MCF 10A (cell line): ENCODE measurements at regions of chr10 and their contacts with region 1.

Region 1: DNA sequence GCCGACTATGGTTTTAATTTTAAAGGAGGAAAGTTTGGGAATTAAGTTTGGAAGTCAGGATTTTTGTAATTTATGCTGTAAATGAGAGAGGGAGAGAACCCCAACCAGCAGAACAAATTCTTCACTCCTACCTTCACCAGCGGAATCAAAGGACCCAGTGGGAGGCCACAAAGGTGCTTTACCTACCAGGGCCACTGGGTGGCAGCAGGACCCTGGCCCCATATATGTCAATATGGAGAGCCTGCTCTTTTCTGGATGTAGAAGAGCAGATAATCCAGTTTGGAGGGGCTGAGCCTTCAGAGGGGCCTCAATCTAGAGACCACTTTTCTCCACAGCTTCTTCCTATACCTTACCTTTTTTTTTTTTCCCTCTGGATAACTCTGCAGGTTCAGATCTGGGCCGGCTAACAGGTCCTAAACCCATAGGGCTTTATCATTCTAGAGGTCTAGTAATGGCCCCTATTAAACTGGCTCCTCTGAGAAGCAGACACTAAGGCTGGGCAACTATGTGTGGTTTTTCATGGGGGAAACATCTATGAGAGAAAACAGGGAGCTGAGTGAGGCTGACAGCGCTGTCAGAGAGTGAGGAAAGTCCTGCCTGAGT is 8.5 kb upstream of the SCD start:
- DNase-seq: peak; percentile 70
- H3K4me3 Mint-ChIP-seq: no peak overlapping the region
- H3K27ac Mint-ChIP-seq: no peak overlapping the region
- H3K4me1 Mint-ChIP-seq: peaks cover 13% of the 10 kb centered on the region
- H3K27me3 Mint-ChIP-seq: peaks cover 15% of the 10 kb centered on the region
- CTCF ChIP-seq: peak; percentile 87

Region 2: GRCh38 chr10:100238429-100238828 is 100.1 kb before region 1 on chr10:
- CTCF ChIA-PET with region 1: no interaction called
- POLR2A ChIA-PET with region 1: no interaction called
- intact Hi-C with region 1: no loop called
- DNase-seq: no peak
- H3K4me3 Mint-ChIP-seq: no peak overlapping the region
- H3K27ac Mint-ChIP-seq: no peak overlapping the region
- H3K4me1 Mint-ChIP-seq: no peaks in the 10 kb centered on the region
- H3K27me3 Mint-ChIP-seq: no peaks in the 10 kb centered on the region
- CTCF ChIP-seq: no peak

Region 3: GRCh38 chr10:100327007-100327717 is 11.4 kb before region 1 on chr10:
- CTCF ChIA-PET with region 1: interaction called, 26 read pairs
- POLR2A ChIA-PET with region 1: no interaction called
- intact Hi-C with region 1: no loop called
- DNase-seq: no peak
- H3K4me3 Mint-ChIP-seq: no peak overlapping the region
- H3K27ac Mint-ChIP-seq: no peak overlapping the region
- H3K4me1 Mint-ChIP-seq: no peaks in the 10 kb centered on the region
- H3K27me3 Mint-ChIP-seq: peaks cover 81% of the 10 kb centered on the region
- CTCF ChIP-seq: no peak

Region 4: DNA sequence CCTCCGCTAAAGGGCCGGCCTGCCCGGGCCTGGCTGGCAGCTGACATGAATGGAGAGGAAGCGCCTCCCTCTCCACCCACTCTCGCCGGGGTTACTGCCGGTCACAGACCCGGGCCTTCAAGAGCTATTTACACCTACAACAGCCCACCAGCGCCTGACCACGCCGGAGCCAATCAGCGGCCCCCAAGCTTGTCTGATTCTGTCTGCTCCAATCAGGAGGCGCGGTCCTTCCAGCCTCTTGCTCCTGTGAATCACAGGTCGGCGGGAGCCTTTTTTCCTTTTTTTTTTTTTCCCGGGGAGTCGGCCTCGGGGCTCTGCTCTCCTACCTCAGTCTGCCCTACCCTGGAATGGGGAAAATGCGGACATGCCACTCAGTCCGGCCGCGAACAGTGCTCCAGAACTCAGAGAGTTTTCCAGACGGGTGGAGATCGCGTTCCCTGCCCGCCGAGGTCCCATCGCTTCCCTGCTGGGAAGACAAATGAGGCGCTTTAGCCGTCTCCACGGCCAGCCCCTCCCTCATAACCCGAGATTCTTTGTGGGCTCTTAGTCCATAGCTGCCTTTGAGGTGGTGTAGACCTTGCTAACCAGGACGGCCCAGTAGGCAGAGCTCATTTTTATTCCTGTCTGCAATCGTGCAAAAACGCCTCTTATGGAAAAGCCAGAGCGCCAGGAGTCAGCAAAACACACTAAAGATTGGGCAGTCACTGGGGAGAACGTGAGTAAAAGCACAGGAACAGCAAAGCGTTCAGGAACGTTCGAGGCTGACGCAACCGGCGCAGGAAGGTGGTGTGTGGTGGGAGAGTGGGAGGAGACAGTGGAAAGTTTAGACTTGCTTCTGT is 35.0 kb after region 1 on chr10:
- CTCF ChIA-PET with region 1: interaction called, 13 read pairs
- POLR2A ChIA-PET with region 1: interaction called, 493 read pairs
- intact Hi-C with region 1: loop called (anchors 1 kb)
- DNase-seq: peak; percentile 100
- H3K4me3 Mint-ChIP-seq: no peak overlapping the region
- H3K27ac Mint-ChIP-seq: no peak overlapping the region
- H3K4me1 Mint-ChIP-seq: peaks cover 14% of the 10 kb centered on the region
- H3K27me3 Mint-ChIP-seq: no peaks in the 10 kb centered on the region
- CTCF ChIP-seq: no peak

Region 5: DNA sequence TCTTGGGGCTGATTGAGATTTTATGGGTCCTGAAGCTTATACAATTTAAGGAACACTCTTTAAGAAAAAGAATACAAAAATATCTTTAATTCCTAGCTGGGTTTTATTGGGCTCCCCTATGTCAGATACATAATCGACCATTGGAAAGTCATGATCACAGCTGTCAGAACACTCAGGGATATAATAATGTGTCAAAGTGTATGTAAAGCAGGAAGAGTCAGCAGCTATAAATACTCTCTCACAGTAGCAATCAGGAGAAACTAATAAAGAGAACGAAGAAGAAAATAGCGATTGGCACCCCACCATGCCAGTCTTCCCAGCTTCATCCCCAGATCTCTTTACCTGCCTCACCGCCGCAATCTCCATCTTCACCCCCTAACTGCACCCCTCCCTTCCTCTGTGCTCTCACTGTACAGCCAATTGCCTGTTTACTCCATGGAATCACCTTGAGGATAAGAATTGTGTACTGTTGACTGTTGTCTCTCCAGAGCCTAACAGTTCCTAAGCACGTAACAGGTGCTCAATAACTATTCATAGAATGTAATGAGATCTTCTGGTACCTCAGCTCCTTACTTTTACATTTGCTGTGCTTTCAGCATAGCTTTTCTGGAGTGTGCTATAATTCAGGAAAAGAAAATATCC is 100.3 kb after region 1 on chr10:
- CTCF ChIA-PET with region 1: interaction called, 372 read pairs
- POLR2A ChIA-PET with region 1: no interaction called
- intact Hi-C with region 1: loop called (anchors 1 kb)
- DNase-seq: no peak
- H3K4me3 Mint-ChIP-seq: no peak overlapping the region
- H3K27ac Mint-ChIP-seq: no peak overlapping the region
- H3K4me1 Mint-ChIP-seq: peaks cover 4% of the 10 kb centered on the region
- H3K27me3 Mint-ChIP-seq: no peaks in the 10 kb centered on the region
- CTCF ChIP-seq: no peak

Region 6: DNA sequence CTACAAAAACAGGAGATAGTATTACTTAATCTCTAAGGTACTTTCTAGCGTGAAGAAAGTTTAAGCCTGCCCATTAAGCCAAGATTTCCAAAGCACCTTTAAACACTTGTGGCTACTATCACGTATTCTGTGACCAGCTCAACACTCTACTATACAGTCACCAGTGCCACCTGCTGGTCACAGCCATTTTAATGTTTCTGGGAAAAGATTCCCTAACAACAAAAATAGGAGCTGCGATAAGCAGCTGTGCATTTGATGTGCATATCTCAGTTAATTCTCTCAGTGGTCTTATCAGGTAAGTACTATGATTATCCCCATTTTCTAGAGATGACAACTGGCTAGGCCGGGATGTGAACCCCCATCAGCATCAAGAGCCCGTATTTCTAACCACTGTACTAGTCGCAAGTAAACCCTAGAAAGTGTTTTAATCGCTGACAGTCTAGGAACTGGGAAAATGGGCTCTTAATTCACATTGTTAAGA is 180.3 kb after region 1 on chr10:
- CTCF ChIA-PET with region 1: interaction called, 42 read pairs
- POLR2A ChIA-PET with region 1: interaction called, 3 read pairs
- intact Hi-C with region 1: no loop called
- DNase-seq: peak; percentile 72
- H3K4me3 Mint-ChIP-seq: no peak overlapping the region
- H3K27ac Mint-ChIP-seq: no peak overlapping the region
- H3K4me1 Mint-ChIP-seq: no peaks in the 10 kb centered on the region
- H3K27me3 Mint-ChIP-seq: no peaks in the 10 kb centered on the region
- CTCF ChIP-seq: peak; percentile 63